Heart left ventricle (tissue), 16 donors: ENCODE measurements at regions of chr6 and their contacts with region 1.

Region 1: DNA sequence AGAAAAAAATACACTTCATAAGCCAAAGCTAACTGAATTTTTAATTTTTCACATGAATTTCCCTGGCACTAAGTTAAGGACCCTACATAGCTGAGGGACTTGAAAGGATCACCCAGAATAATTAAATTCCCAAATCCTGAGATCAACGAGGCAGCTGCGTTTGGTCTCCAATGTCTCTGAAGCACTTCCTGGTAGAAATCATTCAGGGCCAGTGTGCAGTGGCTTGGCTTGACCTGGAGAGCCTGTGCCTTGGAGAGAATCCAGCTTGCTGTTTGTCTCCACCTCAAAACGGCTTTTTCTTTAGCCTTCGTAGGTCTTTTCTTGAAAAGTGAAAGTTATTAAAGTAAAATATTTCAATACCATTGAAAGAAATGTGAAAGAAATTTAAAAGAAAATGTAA is 92.4 kb downstream of the SMOC2 start:
- DNase-seq: peak in 3 of 5 donors; percentile 52 to 61 (median 54)
- ATAC-seq: peak in 3 of 4 donors; percentile 53 to 80 (median 68)
- H3K4me3 ChIP-seq: no peak overlapping the region
- H3K27ac ChIP-seq: peak overlapping the region in 11 of 12 donors; percentile 2 to 65 (median 47)
- H3K4me1 ChIP-seq: peaks cover 0 to 50% (median 6%) of the 10 kb centered on the region in 12 donors
- H3K27me3 ChIP-seq: peaks cover 0 to 5% (median 0%) of the 10 kb centered on the region in 9 donors
- CTCF ChIP-seq: no peak
- POLR2A ChIP-seq: no peak

Region 2: DNA sequence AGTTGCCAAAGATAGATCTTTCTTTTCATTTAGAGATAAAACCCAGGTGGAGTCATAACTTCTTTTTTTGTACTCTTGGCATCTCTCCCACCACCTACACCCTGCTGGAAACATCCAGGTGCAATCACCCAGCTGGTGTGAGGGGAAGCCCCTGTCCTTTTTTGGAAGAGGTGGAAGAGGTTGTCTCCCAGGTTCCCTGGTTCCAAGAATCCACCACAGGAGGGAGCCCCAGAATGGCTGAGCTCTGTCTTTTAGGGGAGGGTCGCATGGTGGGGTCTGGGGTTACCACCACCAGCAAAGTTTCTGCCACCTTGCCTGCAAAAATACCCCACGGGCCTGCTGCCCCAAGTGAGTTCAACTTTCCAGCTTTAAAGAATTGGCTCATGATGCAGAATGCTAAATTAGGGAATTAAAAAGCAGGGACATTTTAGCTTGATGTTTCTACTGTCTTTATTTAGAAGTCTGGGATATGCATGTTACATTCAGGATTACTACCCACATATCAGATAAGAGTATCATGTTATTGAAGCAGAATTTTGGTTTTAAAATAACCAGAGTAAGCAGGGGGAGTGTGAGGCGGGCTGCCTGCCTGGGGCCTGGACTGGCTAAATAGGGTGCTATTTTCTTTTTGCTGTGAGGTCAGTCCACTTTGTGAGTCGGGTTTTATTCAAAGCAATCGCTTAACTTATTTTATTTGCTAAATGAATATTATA is 81.5 kb before region 1 on chr6:
- intact Hi-C with region 1: loop called in 1 of 10 experiments (anchors 5 kb)
- DNase-seq: no peak
- ATAC-seq: peak in 1 of 4 donors; percentile 33
- H3K4me3 ChIP-seq: no peak overlapping the region
- H3K27ac ChIP-seq: peak overlapping the region in 5 of 12 donors; percentile 6 to 60 (median 45)
- H3K4me1 ChIP-seq: peaks cover 0 to 46% (median 9%) of the 10 kb centered on the region in 12 donors
- H3K27me3 ChIP-seq: peaks cover 0 to 3% (median 0%) of the 10 kb centered on the region in 9 donors
- CTCF ChIP-seq: peak in 9 of 12 donors; percentile 13 to 51 (median 27)
- POLR2A ChIP-seq: no peak

Region 3: DNA sequence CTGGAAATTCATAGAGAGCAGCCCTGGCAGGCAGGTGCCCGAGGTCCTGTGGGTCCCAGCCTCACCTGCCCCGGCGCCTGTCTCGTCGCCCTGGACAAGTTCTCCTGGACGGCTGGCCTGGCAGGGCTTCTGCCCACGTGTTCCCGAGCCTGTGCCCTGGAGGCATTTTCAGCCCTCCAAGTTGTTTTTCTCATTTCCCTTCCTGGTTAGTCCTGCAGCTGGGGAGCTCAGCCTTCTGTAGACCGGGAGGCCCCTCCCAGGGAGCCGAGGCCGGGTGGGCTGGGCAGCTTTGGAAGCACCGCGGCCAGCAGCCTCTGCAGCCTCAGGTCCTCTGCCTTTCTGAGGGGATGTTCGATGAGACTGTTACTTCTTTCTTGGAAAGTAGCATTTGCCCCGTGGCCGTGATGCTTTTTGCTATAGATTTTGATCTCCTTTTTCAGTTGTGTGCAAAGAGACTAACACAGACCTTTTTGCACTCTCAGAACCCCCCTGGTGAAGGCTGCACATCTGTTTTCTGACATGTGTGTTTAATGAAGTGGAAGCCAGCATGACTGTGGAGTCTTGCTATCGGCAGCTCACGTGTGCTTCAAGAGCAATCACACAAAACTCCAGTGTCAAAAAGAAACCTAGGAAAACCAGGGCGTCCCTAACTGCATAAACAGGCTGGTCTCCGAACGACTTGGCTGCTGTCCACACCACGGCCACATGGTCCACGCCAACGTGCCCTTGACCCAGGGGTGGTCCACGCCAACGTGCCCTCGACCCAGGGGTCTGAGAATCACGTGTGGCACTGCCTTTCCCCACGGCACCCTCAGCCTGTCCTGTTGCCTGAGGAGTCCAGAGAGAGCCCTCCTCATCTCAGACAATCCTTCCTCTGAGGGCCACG is 115.1 kb after region 1 on chr6:
- intact Hi-C with region 1: no loop called
- DNase-seq: peak in 1 of 5 donors; percentile 49
- ATAC-seq: peak in 3 of 4 donors; percentile 27 to 62 (median 52)
- H3K4me3 ChIP-seq: peak overlapping the region in 1 of 12 donors; percentile 8
- H3K27ac ChIP-seq: peak overlapping the region in 1 of 12 donors; percentile 19
- H3K4me1 ChIP-seq: peaks cover 0 to 14% (median 0%) of the 10 kb centered on the region in 12 donors
- H3K27me3 ChIP-seq: peaks cover 0 to 21% (median 0%) of the 10 kb centered on the region in 9 donors
- CTCF ChIP-seq: no peak
- POLR2A ChIP-seq: no peak